Activated CD4-positive, alpha-beta T cell treated with anti-CD3 and anti-CD28 coated beads, Interleukin-2, amount 10 ng/mL, durations not matched to agents 24 days and 14 days (primary cell): ENCODE measurements at regions of chr3 and their contacts with region 1.

Region 1: GRCh38 chr3:18559331-18559842 is 134.2 kb upstream of the SATB1 start:
- DNase-seq: peak; percentile 80
- H3K4me3 Mint-ChIP-seq: peak overlapping the region; percentile 64
- H3K27ac Mint-ChIP-seq: peak overlapping the region; percentile 97
- H3K4me1 Mint-ChIP-seq: peaks cover 65% of the 10 kb centered on the region
- H3K27me3 Mint-ChIP-seq: no peaks in the 10 kb centered on the region

Region 2: GRCh38 chr3:18279226-18279737 is 280.1 kb before region 1 on chr3:
- intact Hi-C with region 1: no loop called
- DNase-seq: no peak
- H3K4me3 Mint-ChIP-seq: no peak overlapping the region
- H3K27ac Mint-ChIP-seq: no peak overlapping the region
- H3K4me1 Mint-ChIP-seq: no peaks in the 10 kb centered on the region
- H3K27me3 Mint-ChIP-seq: peaks cover 17% of the 10 kb centered on the region

Region 3: GRCh38 chr3:18444595-18445400 is 114.6 kb before region 1 on chr3:
- intact Hi-C with region 1: loop called (anchors 1 kb)
- DNase-seq: peak; percentile 94
- H3K4me3 Mint-ChIP-seq: peak overlapping the region; percentile 96
- H3K27ac Mint-ChIP-seq: peak overlapping the region; percentile 99
- H3K4me1 Mint-ChIP-seq: peaks cover 27% of the 10 kb centered on the region
- H3K27me3 Mint-ChIP-seq: no peaks in the 10 kb centered on the region

Region 4: GRCh38 chr3:18531662-18532236 is 27.6 kb before region 1 on chr3:
- intact Hi-C with region 1: loop called (anchors 1 kb)
- DNase-seq: no peak
- H3K4me3 Mint-ChIP-seq: no peak overlapping the region
- H3K27ac Mint-ChIP-seq: no peak overlapping the region
- H3K4me1 Mint-ChIP-seq: peaks cover 6% of the 10 kb centered on the region
- H3K27me3 Mint-ChIP-seq: no peaks in the 10 kb centered on the region

Region 5: GRCh38 chr3:18649666-18650363 is 90.4 kb after region 1 on chr3:
- intact Hi-C with region 1: loop called (anchors 1 kb)
- DNase-seq: peak; percentile 89
- H3K4me3 Mint-ChIP-seq: peak overlapping the region; percentile 61
- H3K27ac Mint-ChIP-seq: peak overlapping the region; percentile 93
- H3K4me1 Mint-ChIP-seq: peaks cover 73% of the 10 kb centered on the region
- H3K27me3 Mint-ChIP-seq: no peaks in the 10 kb centered on the region

Region 6: DNA sequence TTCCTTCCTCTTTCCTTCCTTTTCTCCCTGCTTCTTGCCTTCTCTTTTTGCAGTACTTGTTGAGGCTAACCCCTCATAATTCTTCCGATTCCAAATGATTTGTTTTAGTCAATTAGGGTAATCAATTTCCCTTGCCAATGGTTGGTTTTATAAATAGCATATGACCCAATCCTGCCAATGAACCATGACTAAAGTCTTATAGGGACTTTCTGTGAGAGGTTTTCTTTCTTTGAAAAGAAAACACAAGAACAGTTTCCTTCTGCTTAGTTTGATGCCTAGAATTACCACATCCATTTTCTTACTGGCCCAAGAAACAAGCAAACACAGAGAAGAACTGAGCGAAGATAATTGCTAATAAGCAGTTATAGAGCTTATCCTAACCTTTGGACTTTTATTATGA is 158.2 kb after region 1 on chr3:
- intact Hi-C with region 1: loop called (anchors 1 kb)
- DNase-seq: peak; percentile 64
- H3K4me3 Mint-ChIP-seq: peak overlapping the region; percentile 56
- H3K27ac Mint-ChIP-seq: peak overlapping the region; percentile 95
- H3K4me1 Mint-ChIP-seq: peaks cover 56% of the 10 kb centered on the region
- H3K27me3 Mint-ChIP-seq: no peaks in the 10 kb centered on the region

Region 7: GRCh38 chr3:18872466-18872865 is 313.1 kb after region 1 on chr3:
- intact Hi-C with region 1: loop called (anchors 1 kb)
- DNase-seq: no peak
- H3K4me3 Mint-ChIP-seq: no peak overlapping the region
- H3K27ac Mint-ChIP-seq: no peak overlapping the region
- H3K4me1 Mint-ChIP-seq: peaks cover 32% of the 10 kb centered on the region
- H3K27me3 Mint-ChIP-seq: no peaks in the 10 kb centered on the region